ENCODE measurements at regions of chr7 and their contacts with region 1.

Region 1: GRCh38 chr7:23013715-23014649 is at the start of gene HYCC1:
- DNase-seq: peak; percentile 99 to 100 (median 100)
- H3K4me3 ChIP-seq: peak within 1 kb of the TSS; percentile 55 to 76
- H3K4me3 Mint-ChIP-seq: peak within 1 kb of the TSS; percentile 94 to 99 (median 97)
- H3K27ac ChIP-seq: peak within 1 kb of the TSS; percentile 58
- H3K27ac Mint-ChIP-seq: peak within 1 kb of the TSS; percentile 88 to 99 (median 93)
- H3K4me1 ChIP-seq: peaks cover 49% of the 10 kb centered on the region
- H3K4me1 Mint-ChIP-seq: peaks cover 12 to 28% (median 24%) of the 10 kb centered on the region in 4 donors
- H3K27me3 ChIP-seq: no peaks in the 10 kb centered on the region
- H3K27me3 Mint-ChIP-seq: peaks cover 0 to 2% of the 10 kb centered on the region in 2 donors
- total RNA-seq, gene HYCC1: 16.2 to 19.6 TPM

Region 2: DNA sequence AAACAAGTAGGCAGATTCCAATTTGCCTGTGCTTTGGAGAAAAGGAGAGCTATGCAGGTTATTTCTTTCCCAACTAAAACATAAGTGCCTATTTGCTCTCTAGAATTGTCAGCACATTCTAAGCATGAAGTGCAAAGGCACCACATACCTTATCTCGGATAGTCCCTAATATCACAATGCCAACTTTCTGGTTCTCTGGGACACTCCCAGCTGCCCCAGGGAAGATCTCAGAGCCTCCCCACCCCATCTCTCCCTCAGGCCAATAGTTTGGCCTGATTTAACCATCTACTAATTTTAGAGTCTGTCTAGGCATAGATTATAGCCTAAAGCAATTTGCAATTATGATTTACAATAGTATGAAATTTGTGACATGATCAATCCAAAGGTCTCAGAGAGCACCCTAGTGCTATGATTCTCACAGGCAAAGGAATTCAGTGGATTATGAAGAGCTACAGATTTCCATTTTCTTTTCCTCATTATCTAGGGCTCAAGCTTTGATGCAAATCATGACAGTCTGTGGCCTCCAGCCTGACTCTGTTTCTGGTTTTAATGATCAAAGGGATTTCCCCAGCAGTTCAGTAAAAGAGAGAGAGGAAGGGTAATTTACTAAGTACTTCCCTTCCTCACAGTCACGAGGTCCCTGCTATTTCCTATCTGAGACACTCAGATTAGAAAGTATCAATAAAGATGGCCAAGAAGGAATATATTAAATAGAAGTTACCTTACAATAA is 315.9 kb before region 1 on chr7:
- CTCF ChIA-PET with region 1: no interaction called
- POLR2A ChIA-PET with region 1: no interaction called
- intact Hi-C with region 1: loop called (anchors 10 kb)
- DNase-seq: peak; percentile 24 to 52 (median 28)
- H3K4me3 ChIP-seq: no peak overlapping the region
- H3K4me3 Mint-ChIP-seq: peak overlapping the region in 7 of 8 donors; percentile 13 to 71 (median 41)
- H3K27ac ChIP-seq: peak overlapping the region; percentile 22
- H3K27ac Mint-ChIP-seq: peak overlapping the region in 6 of 7 donors; percentile 13 to 84 (median 52)
- H3K4me1 ChIP-seq: peaks cover 49% of the 10 kb centered on the region
- H3K4me1 Mint-ChIP-seq: peaks cover 38 to 61% (median 50%) of the 10 kb centered on the region in 4 donors
- H3K27me3 ChIP-seq: no peaks in the 10 kb centered on the region
- H3K27me3 Mint-ChIP-seq: peaks cover 0 to 2% of the 10 kb centered on the region in 2 donors

Region 3: DNA sequence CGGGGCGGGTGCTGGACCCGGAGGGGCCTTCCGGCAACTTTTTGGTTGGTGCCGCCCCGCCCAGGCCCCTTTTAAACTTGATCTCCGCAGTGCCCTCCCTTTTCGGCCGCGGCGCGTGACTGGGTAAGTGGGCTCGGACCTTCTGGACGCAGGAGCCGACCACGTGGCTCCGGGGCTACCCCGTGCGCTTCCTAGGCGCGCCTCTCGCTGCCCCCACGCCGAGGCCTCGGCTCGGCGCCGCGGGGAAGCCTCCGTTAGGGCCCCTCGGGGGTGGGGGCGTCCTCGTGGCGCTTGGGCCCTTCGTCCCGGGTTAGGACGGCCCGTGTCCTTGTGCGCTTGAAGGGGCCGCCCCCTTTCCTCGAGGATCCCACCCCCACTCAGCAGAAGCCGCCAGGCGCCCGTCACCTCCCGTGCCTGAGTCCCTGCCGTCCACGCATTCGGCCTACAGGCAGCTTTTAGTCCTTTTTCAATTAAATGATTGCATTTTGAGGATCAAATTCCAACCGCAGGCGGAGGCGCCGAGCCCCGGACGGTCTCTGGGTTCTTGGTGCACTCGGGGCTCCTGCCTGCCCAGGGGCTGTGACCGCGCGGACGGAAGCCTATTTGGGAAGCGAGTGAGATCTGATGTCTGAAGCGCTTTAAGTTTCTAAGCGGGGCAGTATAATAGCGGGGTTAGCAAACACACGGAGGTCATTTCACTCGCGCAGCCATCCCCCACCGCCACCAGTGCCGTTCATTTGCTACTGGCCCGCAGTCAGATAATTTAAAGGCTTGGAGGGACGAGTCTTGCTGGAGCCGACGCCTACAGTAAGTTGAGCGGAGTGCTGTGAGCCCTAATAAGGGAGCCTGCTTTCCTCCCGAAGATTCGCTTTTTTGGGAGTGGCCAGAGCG is 159.6 kb before region 1 on chr7:
- CTCF ChIA-PET with region 1: interaction called, 4 read pairs
- POLR2A ChIA-PET with region 1: no interaction called
- intact Hi-C with region 1: loop called (anchors 1 kb)
- DNase-seq: peak; percentile 40 to 84 (median 77)
- H3K4me3 ChIP-seq: peak overlapping the region; percentile 63 to 93
- H3K4me3 Mint-ChIP-seq: peak overlapping the region; percentile 88 to 95 (median 95)
- H3K27ac ChIP-seq: peak overlapping the region; percentile 90
- H3K27ac Mint-ChIP-seq: peak overlapping the region; percentile 79 to 96 (median 93)
- H3K4me1 ChIP-seq: peaks cover 20% of the 10 kb centered on the region
- H3K4me1 Mint-ChIP-seq: peaks cover 8 to 20% (median 18%) of the 10 kb centered on the region in 4 donors
- H3K27me3 ChIP-seq: no peaks in the 10 kb centered on the region
- H3K27me3 Mint-ChIP-seq: peaks cover 0 to 2% of the 10 kb centered on the region in 2 donors

Region 4: GRCh38 chr7:23181684-23182553 is 167.9 kb after region 1 on chr7 and contains the start of gene NUP42:
- CTCF ChIA-PET with region 1: no interaction called
- POLR2A ChIA-PET with region 1: no interaction called
- intact Hi-C with region 1: loop called (anchors 1 kb)
- DNase-seq: peak; percentile 93 to 96 (median 95)
- H3K4me3 ChIP-seq: peak within 1 kb of the TSS; percentile 95 to 98
- H3K4me3 Mint-ChIP-seq: peak within 1 kb of the TSS; percentile 94 to 100 (median 98)
- H3K27ac ChIP-seq: peak within 1 kb of the TSS; percentile 90
- H3K27ac Mint-ChIP-seq: peak within 1 kb of the TSS; percentile 96 to 100 (median 99)
- H3K4me1 ChIP-seq: peaks cover 38% of the 10 kb centered on the region
- H3K4me1 Mint-ChIP-seq: peaks cover 24 to 43% (median 27%) of the 10 kb centered on the region in 4 donors
- H3K27me3 ChIP-seq: no peaks in the 10 kb centered on the region
- H3K27me3 Mint-ChIP-seq: peaks cover 0 to 2% of the 10 kb centered on the region in 2 donors
- total RNA-seq, gene NUP42: 33.3 to 37.8 TPM

Region 5: GRCh38 chr7:23531794-23532489 is 518.0 kb after region 1 on chr7 and contains the start of gene TRA2A:
- CTCF ChIA-PET with region 1: no interaction called
- POLR2A ChIA-PET with region 1: interaction called, 3 read pairs
- intact Hi-C with region 1: loop called (anchors 5 kb)
- DNase-seq: peak; percentile 92 to 96 (median 95)
- H3K4me3 ChIP-seq: peak within 1 kb of the TSS; percentile 67 to 90
- H3K4me3 Mint-ChIP-seq: peak within 1 kb of the TSS; percentile 98 to 100 (median 99)
- H3K27ac ChIP-seq: peak within 1 kb of the TSS; percentile 96
- H3K27ac Mint-ChIP-seq: peak within 1 kb of the TSS; percentile 100
- H3K4me1 ChIP-seq: peaks cover 40% of the 10 kb centered on the region
- H3K4me1 Mint-ChIP-seq: peaks cover 28 to 52% (median 40%) of the 10 kb centered on the region in 4 donors
- H3K27me3 ChIP-seq: no peaks in the 10 kb centered on the region
- H3K27me3 Mint-ChIP-seq: no peaks in the 10 kb centered on the region
- total RNA-seq, gene TRA2A: 143 to 145 TPM